ENCODE measurements at regions of chr1 and their contacts with region 1.

Region 1: DNA sequence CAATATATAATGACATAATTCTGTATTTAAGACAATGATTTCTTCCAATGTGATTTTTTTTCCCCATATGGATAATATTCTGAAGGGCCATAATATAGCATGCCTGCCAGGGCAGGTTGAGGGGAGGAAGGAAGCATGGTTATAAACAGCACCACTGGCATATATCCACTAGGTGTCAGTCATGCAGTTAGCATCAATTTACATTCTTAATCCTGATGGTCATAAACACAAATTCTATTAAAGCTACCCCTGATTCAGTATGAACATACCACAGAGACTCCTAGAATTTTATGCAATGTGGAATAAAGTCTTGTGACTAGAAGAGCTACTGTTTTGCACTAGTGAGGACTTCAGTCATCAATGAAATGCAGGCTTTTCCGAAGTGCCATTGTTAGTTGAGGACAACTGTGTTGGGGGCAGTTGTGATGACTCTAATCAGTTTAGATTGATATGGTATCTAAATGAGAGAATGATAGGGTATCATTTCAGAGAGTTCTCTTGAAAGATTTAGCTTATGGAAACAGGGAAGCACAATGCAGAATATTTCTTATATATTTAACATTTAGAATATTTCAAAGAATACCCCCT is 342.7 kb upstream of the NR5A2 start:
- DNase-seq: peak in 3 of 9 experiments; percentile 6 to 57 (median 45)
- ATAC-seq: peak; percentile 61
- H3K4me3 ChIP-seq: no peak overlapping the region
- H3K4me3 Mint-ChIP-seq: no peak overlapping the region
- H3K27ac ChIP-seq: no peak overlapping the region
- H3K27ac Mint-ChIP-seq: no peak overlapping the region
- H3K4me1 ChIP-seq: no peaks in the 10 kb centered on the region
- H3K4me1 Mint-ChIP-seq: no peaks in the 10 kb centered on the region
- H3K27me3 ChIP-seq: no peaks in the 10 kb centered on the region
- H3K27me3 Mint-ChIP-seq: peaks cover 8% of the 10 kb centered on the region
- CTCF ChIP-seq: peak; percentile 68

Region 2: DNA sequence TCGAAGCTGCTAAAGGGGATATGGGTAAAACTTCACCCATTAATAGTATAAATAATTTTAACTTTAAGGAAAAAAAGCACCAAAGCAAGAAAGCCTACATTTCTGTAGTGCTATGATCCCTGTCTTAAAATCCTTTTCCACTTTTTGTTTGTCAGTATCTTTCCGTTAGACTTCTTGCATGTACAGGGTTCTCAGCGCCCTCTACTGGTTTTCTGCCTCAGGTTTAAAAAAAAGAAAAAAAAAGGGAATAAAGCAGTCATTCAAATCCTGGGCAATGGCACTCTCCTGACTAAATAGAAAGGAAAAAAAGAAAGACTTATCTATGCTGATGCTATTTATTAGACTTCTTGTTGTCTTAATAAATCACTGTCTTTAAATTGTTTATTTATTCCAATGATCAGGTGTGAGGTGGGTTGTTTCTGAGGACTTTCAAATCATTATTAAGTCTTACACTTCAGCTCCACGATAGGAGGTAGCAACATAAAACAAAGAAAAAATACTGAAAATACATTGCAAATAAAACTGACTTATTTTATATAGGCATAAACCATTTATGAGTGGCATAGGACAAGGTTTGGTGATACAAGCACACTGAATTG is 132.7 kb before region 1 on chr1:
- CTCF ChIA-PET with region 1: no interaction called
- POLR2A ChIA-PET with region 1: no interaction called
- intact Hi-C with region 1: no loop called
- DNase-seq: peak in 3 of 9 experiments; percentile 16 to 54 (median 30)
- ATAC-seq: no peak
- H3K4me3 ChIP-seq: no peak overlapping the region
- H3K4me3 Mint-ChIP-seq: no peak overlapping the region
- H3K27ac ChIP-seq: no peak overlapping the region
- H3K27ac Mint-ChIP-seq: no peak overlapping the region
- H3K4me1 ChIP-seq: no peaks in the 10 kb centered on the region
- H3K4me1 Mint-ChIP-seq: no peaks in the 10 kb centered on the region
- H3K27me3 ChIP-seq: no peaks in the 10 kb centered on the region
- H3K27me3 Mint-ChIP-seq: peaks cover 11% of the 10 kb centered on the region
- CTCF ChIP-seq: peak; percentile 45

Region 3: GRCh38 chr1:199742547-199742946 is 57.8 kb after region 1 on chr1:
- CTCF ChIA-PET with region 1: no interaction called
- POLR2A ChIA-PET with region 1: no interaction called
- intact Hi-C with region 1: no loop called
- DNase-seq: peak in 1 of 9 experiments; percentile 22
- ATAC-seq: no peak
- H3K4me3 ChIP-seq: no peak overlapping the region
- H3K4me3 Mint-ChIP-seq: no peak overlapping the region
- H3K27ac ChIP-seq: no peak overlapping the region
- H3K27ac Mint-ChIP-seq: no peak overlapping the region
- H3K4me1 ChIP-seq: no peaks in the 10 kb centered on the region
- H3K4me1 Mint-ChIP-seq: no peaks in the 10 kb centered on the region
- H3K27me3 ChIP-seq: no peaks in the 10 kb centered on the region
- H3K27me3 Mint-ChIP-seq: no peaks in the 10 kb centered on the region
- CTCF ChIP-seq: no peak

Region 4: DNA sequence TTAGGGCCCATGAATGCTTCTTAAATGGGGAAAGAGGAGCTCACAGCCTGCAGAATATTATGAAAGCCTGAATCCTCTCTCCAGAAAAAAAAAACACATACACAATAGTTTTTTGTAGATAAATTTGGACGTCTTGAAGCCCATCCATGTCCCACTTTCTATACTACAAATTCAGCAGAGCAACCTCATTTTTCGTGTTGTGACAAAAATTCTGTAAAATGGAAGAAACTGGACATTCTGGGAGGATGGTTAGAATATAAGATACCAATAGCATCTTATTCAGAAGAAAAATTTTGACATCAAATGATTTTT is 622.9 kb after region 1 on chr1:
- CTCF ChIA-PET with region 1: no interaction called
- POLR2A ChIA-PET with region 1: no interaction called
- intact Hi-C with region 1: loop called in 1 of 2 experiments (anchors 2 kb)
- DNase-seq: no peak
- ATAC-seq: no peak
- H3K4me3 ChIP-seq: no peak overlapping the region
- H3K4me3 Mint-ChIP-seq: no peak overlapping the region
- H3K27ac ChIP-seq: no peak overlapping the region
- H3K27ac Mint-ChIP-seq: no peak overlapping the region
- H3K4me1 ChIP-seq: peaks cover 9% of the 10 kb centered on the region
- H3K4me1 Mint-ChIP-seq: peaks cover 10% of the 10 kb centered on the region
- H3K27me3 ChIP-seq: no peaks in the 10 kb centered on the region
- H3K27me3 Mint-ChIP-seq: no peaks in the 10 kb centered on the region
- CTCF ChIP-seq: peak; percentile 46

Measured in CD8-positive, alpha-beta T cell (primary cell).